ENCODE measurements at regions of chr2 and their contacts with region 1.

Region 1: DNA sequence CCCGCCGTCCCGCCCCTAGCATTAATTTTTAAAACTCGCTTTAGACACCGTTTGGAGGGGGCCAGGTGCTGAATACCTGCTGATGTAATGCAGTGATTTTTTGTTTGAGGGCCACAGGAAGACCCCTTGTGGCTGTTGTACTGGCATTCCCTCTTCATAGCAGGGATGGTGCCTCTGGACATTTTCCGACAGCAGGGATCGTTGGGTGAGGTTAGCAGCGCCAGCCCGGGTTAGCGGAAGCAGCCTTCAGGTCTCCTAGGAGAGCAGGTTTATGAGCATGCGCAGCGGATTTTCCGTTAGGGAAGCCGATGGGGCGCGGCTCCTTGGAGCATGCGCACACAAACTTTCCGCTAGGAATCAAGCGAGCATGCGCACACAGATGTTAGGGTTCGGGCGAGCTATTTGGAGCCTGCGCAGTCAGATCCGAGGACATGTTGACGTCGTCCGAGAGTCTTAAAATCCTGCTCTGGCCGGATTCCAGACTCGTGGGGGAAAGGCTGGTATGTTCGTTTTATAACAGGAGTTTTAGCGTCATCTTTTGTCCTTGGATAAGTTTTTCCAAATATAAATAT is 17.2 kb upstream of the C2orf74 start:
- DNase-seq: peak; percentile 96
- ATAC-seq: peak; percentile 99
- H3K4me3 Mint-ChIP-seq: peak overlapping the region; percentile 98
- H3K27ac Mint-ChIP-seq: peak overlapping the region; percentile 96
- H3K4me1 Mint-ChIP-seq: peaks cover 4% of the 10 kb centered on the region
- H3K27me3 Mint-ChIP-seq: no peaks in the 10 kb centered on the region

Region 2: DNA sequence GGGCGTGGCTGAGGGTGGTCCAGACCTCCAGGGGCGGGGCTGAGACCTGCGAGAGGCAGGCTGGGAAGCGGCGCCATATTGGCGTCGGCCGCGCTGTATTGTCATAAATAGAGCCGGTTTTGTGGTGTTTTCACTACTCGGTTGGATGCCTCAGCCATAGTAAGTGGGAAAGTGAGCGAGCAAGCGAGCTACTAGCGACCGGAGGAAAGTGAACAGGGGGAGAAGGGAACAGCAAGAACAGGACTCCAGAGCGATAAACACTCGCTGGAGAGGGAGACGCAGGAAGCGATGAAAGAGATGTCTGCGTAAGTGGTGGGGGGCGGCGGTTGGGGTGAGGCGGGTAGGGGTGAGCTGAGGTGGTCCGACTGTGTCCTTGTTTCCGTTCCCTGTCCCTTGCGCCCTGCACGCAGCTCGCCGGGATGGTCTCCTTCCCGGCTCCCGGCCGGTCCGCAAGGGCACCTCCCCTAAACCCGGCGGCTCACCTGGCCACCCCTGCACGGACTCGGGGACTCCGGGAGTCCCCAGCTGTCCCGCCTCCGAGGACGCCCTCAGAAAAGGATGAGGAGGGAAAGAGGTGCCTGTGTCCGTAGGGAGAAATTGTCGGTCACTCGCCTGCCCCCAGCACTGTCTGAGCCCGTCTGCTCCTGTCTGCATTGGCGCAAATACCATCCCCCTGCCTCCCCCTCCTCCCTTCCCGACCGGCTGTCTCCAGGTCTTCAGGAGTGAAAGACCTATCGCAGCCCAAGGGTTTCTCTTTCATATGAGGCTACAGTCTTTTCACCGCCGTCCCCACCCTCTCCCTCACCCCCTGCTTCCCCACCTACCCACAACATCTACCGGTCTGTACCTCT is 388.4 kb before region 1 on chr2 and contains the start of gene PAPOLG:
- CTCF ChIA-PET with region 1: interaction called, 3 read pairs
- POLR2A ChIA-PET with region 1: no interaction called
- intact Hi-C with region 1: loop called in 1 of 2 experiments (anchors 1 kb)
- DNase-seq: peak; percentile 99
- ATAC-seq: peak; percentile 98
- H3K4me3 Mint-ChIP-seq: peak within 1 kb of the TSS; percentile 99
- H3K27ac Mint-ChIP-seq: peak within 1 kb of the TSS; percentile 100
- H3K4me1 Mint-ChIP-seq: peaks cover 34% of the 10 kb centered on the region
- H3K27me3 Mint-ChIP-seq: no peaks in the 10 kb centered on the region
- total RNA-seq, gene PAPOLG: 13.8 to 14.2 TPM

Region 3: DNA sequence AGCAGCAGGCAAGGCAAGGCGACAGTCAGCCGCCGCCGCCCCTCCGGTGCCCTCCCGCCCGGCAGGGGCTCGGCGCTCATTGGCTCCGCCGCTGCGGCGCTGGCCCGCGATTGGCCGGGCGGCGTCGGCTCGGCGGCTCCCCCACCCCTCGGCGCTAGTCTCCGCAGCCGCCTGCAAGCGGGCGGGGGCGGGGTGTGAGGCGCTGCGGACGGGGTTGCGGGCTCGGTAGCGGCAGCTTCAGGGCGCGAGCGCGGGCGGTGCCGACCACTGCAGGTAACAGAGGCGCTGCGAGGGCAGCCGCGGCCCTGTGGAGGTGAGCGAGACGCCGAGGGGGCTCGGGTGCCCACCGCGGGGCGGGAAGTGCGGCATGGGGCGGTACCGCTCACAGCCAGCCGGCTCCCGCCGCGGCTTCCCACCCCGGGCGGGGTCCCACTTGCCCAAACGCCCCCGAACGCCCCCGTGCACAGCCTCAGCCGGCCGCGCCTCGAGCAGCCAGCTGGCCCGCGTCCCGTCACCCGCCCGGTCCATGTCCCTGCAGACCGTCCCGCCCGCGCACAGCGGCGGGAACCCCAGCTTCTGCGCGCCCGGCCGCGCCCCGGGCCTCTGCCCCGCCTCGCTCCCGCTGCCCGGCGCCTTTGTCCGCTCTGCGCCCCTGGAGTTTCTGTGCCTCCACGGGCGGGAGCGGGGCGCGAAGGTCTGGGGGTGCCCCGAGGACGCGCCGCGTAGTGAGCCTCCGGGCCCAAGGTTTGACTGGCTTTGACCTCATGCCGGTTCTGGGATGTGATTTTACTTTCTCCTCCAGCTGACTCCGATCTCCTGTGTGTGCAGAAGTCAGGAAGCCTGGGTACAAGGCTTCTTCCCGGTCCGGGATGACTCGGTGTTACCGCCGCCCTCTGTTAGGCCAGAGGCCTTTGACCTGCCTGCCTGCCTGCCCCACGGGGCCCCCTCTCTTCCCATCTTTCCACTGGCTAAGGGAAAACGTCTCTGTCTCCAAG is 78.8 kb before region 1 on chr2 and contains the start of gene SANBR:
- CTCF ChIA-PET with region 1: no interaction called
- POLR2A ChIA-PET with region 1: no interaction called
- intact Hi-C with region 1: loop called in 1 of 2 experiments (anchors 1 kb)
- DNase-seq: peak; percentile 90
- ATAC-seq: peak; percentile 99
- H3K4me3 Mint-ChIP-seq: peak within 1 kb of the TSS; percentile 80
- H3K27ac Mint-ChIP-seq: peak within 1 kb of the TSS; percentile 78
- H3K4me1 Mint-ChIP-seq: peaks cover 12% of the 10 kb centered on the region
- H3K27me3 Mint-ChIP-seq: no peaks in the 10 kb centered on the region
- total RNA-seq, gene SANBR: 2.5 to 3.0 TPM